ENCODE measurements at regions of chr3 and their contacts with region 1.

Region 1: GRCh38 chr3:17151598-17152373 is 267.0 kb downstream of the PLCL2 start:
- DNase-seq: peak; percentile 54 to 92 (median 76)
- ATAC-seq: peak; percentile 92
- H3K4me3 ChIP-seq: peak overlapping the region; percentile 9 to 12
- H3K4me3 Mint-ChIP-seq: peak overlapping the region; percentile 67
- H3K27ac ChIP-seq: peak overlapping the region; percentile 13 to 60
- H3K27ac Mint-ChIP-seq: peak overlapping the region; percentile 88
- H3K4me1 ChIP-seq: peaks cover 27% of the 10 kb centered on the region
- H3K4me1 Mint-ChIP-seq: peaks cover 45% of the 10 kb centered on the region
- H3K27me3 ChIP-seq: no peaks in the 10 kb centered on the region
- H3K27me3 Mint-ChIP-seq: no peaks in the 10 kb centered on the region
- CTCF ChIP-seq: no peak

Region 2: GRCh38 chr3:16842272-16843270 is 309.2 kb before region 1 on chr3:
- CTCF ChIA-PET with region 1: no interaction called
- POLR2A ChIA-PET with region 1: interaction called, 10 read pairs
- intact Hi-C with region 1: no loop called
- DNase-seq: peak; percentile 48 to 91 (median 77)
- ATAC-seq: peak; percentile 90
- H3K4me3 ChIP-seq: peak overlapping the region; percentile 35 to 42
- H3K4me3 Mint-ChIP-seq: peak overlapping the region; percentile 80
- H3K27ac ChIP-seq: peak overlapping the region; percentile 63 to 89
- H3K27ac Mint-ChIP-seq: peak overlapping the region; percentile 98
- H3K4me1 ChIP-seq: peaks cover 60% of the 10 kb centered on the region
- H3K4me1 Mint-ChIP-seq: peaks cover 81% of the 10 kb centered on the region
- H3K27me3 ChIP-seq: no peaks in the 10 kb centered on the region
- H3K27me3 Mint-ChIP-seq: no peaks in the 10 kb centered on the region
- CTCF ChIP-seq: no peak

Region 3: GRCh38 chr3:18489939-18490338 is 1338.2 kb after region 1 on chr3:
- CTCF ChIA-PET with region 1: no interaction called
- POLR2A ChIA-PET with region 1: no interaction called
- intact Hi-C with region 1: no loop called
- DNase-seq: peak in 6 of 9 experiments; percentile 12 to 72 (median 54)
- ATAC-seq: peak; percentile 46
- H3K4me3 ChIP-seq: no peak overlapping the region
- H3K4me3 Mint-ChIP-seq: peak overlapping the region; percentile 9
- H3K27ac ChIP-seq: no peak overlapping the region
- H3K27ac Mint-ChIP-seq: peak overlapping the region; percentile 78
- H3K4me1 ChIP-seq: peaks cover 24% of the 10 kb centered on the region
- H3K4me1 Mint-ChIP-seq: peaks cover 38% of the 10 kb centered on the region
- H3K27me3 ChIP-seq: no peaks in the 10 kb centered on the region
- H3K27me3 Mint-ChIP-seq: no peaks in the 10 kb centered on the region
- CTCF ChIP-seq: no peak